PC-9 (cell line): ENCODE measurements at regions of chr1 and their contacts with region 1.

Region 1: GRCh38 chr1:53145942-53146708 is 3.7 kb upstream of the SLC1A7 start:
- DNase-seq: peak; percentile 96 to 98
- H3K4me3 ChIP-seq: no peak overlapping the region; the same call in 1 of the 2 replicates
- H3K27ac ChIP-seq: peak overlapping the region; percentile 75
- H3K4me1 ChIP-seq: peaks cover 32% of the 10 kb centered on the region
- H3K27me3 ChIP-seq: no peaks in the 10 kb centered on the region
- CTCF ChIP-seq: no peak

Region 2: GRCh38 chr1:52756020-52756419 is 390.1 kb before region 1 on chr1:
- CTCF ChIA-PET with region 1: interaction called, 10 read pairs
- POLR2A ChIA-PET with region 1: no interaction called
- intact Hi-C with region 1: no loop called
- DNase-seq: no peak
- H3K4me3 ChIP-seq: no peak overlapping the region
- H3K27ac ChIP-seq: no peak overlapping the region
- H3K4me1 ChIP-seq: peaks cover under 1% of the 10 kb centered on the region; the same call in 1 of the 2 replicates
- H3K27me3 ChIP-seq: no peaks in the 10 kb centered on the region
- CTCF ChIP-seq: no peak

Region 3: DNA sequence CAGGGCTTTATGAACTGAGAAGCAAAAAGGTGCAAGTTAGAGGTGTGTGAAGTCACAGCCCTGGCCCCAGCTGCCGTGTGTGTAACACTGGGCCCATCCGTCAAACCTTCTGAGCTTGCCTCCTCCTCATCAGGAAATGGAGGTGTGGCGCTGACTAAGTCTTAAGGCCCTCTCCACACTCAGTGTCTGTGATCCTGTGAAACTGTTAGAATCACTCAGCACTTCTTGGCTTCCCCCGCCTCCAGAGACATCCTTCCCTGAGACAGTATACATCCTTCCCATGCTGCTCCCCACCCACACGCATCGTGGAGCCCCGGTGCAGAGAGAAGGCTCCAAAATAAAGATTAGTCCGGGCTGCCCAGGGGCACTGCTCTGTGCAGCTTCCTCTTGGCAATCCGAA is 148.4 kb after region 1 on chr1:
- CTCF ChIA-PET with region 1: no interaction called
- POLR2A ChIA-PET with region 1: no interaction called
- intact Hi-C with region 1: no loop called
- DNase-seq: no peak
- H3K4me3 ChIP-seq: no peak overlapping the region
- H3K27ac ChIP-seq: no peak overlapping the region
- H3K4me1 ChIP-seq: peaks cover 17% of the 10 kb centered on the region
- H3K27me3 ChIP-seq: no peaks in the 10 kb centered on the region
- CTCF ChIP-seq: no peak

Region 4: DNA sequence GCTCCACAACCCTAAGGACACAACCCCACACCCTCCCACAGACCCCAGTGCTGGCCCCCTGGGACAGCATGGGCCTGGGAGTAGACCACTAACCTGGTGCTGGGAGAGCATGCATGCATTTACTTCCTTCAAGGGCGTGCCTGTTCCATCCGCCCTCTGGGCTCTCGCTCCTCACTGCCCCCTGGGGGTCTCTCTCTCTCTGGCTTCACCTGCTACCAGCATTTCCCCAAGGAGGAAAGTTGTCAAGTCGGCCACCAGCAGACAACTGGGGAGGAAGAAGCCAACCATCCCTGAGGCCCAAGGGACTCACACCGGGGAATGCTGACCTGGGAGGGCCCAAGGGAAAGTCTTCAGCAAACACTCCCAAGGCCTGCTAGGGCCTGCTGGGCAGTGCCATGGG is 175.3 kb after region 1 on chr1:
- CTCF ChIA-PET with region 1: no interaction called
- POLR2A ChIA-PET with region 1: no interaction called
- intact Hi-C with region 1: no loop called
- DNase-seq: no peak
- H3K4me3 ChIP-seq: no peak overlapping the region
- H3K27ac ChIP-seq: no peak overlapping the region
- H3K4me1 ChIP-seq: peaks cover 13% of the 10 kb centered on the region
- H3K27me3 ChIP-seq: no peaks in the 10 kb centered on the region
- CTCF ChIP-seq: no peak